ENCODE measurements at regions of chr1 and their contacts with region 1.

Region 1: DNA sequence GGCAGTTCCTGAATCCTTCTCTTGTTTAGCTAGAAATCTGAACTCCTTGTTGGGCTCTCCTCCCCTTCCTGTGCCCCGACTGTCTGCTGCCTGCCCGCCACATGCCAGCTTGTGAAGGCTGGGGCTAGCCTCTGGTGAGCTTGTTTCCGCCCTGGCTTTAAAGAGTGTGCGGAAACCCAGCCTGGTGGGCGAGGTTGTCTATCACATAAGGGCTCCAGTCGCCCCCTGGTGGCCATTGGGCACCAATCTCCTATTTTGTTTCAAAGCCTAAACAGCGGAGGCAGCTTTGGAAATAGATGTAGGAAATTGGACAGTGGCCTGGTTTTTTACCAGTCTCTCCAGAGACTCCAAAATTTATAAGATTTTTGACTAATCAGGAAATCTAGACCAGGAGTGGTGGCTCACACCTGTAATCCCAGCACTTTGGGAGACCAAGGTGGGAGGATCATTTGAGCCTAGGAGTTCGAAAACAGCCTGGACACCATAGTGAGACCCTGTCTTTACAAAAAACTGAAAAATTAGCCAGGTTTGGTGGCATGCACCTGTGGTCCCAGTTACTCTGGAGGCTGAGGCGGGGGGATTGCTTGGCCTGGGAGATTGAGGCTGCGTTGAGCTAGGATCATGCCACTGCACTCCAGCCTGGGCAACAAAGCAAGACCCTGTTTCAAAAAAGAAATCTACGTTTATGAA is 9.8 kb downstream of the ATP8B2 start:
- DNase-seq: peak; percentile 95
- H3K4me3 Mint-ChIP-seq: peak overlapping the region; percentile 58
- H3K27ac Mint-ChIP-seq: peak overlapping the region; percentile 89
- H3K4me1 Mint-ChIP-seq: peaks cover 94% of the 10 kb centered on the region
- H3K27me3 Mint-ChIP-seq: no peaks in the 10 kb centered on the region

Region 2: GRCh38 chr1:154272217-154272998 is 62.8 kb before region 1 on chr1 and contains the start of gene HAX1:
- CTCF ChIA-PET with region 1: interaction called, 26 read pairs
- DNase-seq: peak; percentile 98
- H3K4me3 Mint-ChIP-seq: peak within 1 kb of the TSS; percentile 96
- H3K27ac Mint-ChIP-seq: peak within 1 kb of the TSS; percentile 97
- H3K4me1 Mint-ChIP-seq: peaks cover 37% of the 10 kb centered on the region
- H3K27me3 Mint-ChIP-seq: no peaks in the 10 kb centered on the region

Region 3: GRCh38 chr1:154352581-154353459 is 17.6 kb after region 1 on chr1:
- CTCF ChIA-PET with region 1: interaction called, 125 read pairs
- DNase-seq: peak; percentile 70
- H3K4me3 Mint-ChIP-seq: peak overlapping the region; percentile 60
- H3K27ac Mint-ChIP-seq: peak overlapping the region; percentile 83
- H3K4me1 Mint-ChIP-seq: peaks cover 42% of the 10 kb centered on the region
- H3K27me3 Mint-ChIP-seq: peaks cover 17% of the 10 kb centered on the region

Measured in activated naive CD4-positive, alpha-beta T cell treated with anti-CD3 and anti-CD28 coated beads, Interleukin-2, amount 10 ng/mL, durations not matched to agents 7 days and 5 days (primary cell).